ENCODE measurements at regions of chr11 and their contacts with region 1.

Region 1: DNA sequence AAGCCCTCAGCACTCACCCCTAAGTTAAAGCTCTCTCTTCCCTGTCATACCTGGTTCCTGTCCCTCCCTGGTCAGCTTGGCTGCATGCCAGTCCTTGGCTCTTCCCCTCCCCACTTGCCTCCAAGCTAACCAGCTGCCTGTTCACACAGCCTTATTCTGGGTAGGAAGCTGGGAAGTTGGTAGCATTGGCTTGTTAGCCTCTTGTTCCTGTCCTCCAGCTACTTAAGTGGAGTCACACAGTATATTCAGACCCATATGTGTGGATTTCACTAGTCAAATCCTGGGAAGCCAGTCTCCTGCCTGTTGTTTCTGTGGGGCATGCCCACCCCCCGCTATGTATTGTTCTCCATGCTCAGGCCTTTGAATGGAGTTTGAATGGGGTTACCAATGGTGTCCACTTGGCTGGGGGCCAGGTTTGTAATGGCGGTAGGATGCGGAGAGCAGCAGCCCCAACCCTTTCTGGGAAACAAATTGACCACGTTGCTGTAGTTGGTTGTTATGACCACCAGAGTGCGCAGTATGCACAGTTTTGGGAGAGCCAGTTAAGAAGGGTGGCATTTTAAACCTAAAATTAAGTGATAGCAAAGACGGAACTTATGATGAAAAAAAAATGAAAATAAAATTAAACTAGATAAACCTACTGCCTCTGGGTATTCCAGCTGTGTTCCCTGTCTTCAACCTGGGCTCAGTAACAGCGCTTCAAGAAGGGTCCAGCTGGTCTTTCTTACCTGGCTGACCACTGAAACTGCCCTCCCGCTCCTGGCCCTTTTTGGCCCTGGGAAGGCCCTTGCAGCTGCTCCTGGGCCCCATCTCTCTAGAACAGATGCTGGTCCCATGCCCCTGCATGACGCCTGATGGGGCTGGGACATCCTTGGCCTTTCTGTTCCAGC is 10.7 kb upstream of the RPS3 start:
- DNase-seq: peak; percentile 86 to 87
- ATAC-seq: peak; percentile 57 to 73
- H3K4me3 ChIP-seq: no peak overlapping the region
- H3K27ac ChIP-seq: peak overlapping the region; percentile 36 to 75; a peak in 5 of 6 replicates
- H3K4me1 ChIP-seq: peaks cover 39% of the 10 kb centered on the region
- CTCF ChIP-seq: peak; percentile 95
- EP300 ChIP-seq: no peak
- POLR2A ChIP-seq: no peak
- RAD21 ChIP-seq: peak; percentile 92 to 94

Region 2: GRCh38 chr11:75328426-75329277 is 60.0 kb before region 1 on chr11:
- CTCF ChIA-PET with region 1: interaction called, 147 read pairs
- POLR2A ChIA-PET with region 1: interaction called, 3 read pairs
- DNase-seq: peak; percentile 85 to 86
- ATAC-seq: peak; percentile 94 to 95
- H3K4me3 ChIP-seq: no peak overlapping the region
- H3K27ac ChIP-seq: peak overlapping the region; percentile 17 to 57; a peak in 5 of 6 replicates
- H3K4me1 ChIP-seq: peaks cover 62% of the 10 kb centered on the region
- CTCF ChIP-seq: peak; percentile 85
- EP300 ChIP-seq: no peak
- POLR2A ChIP-seq: no peak
- RAD21 ChIP-seq: peak; percentile 96 to 98

Region 3: GRCh38 chr11:75371941-75372789 is 16.5 kb before region 1 on chr11:
- CTCF ChIA-PET with region 1: interaction called, 83 read pairs
- POLR2A ChIA-PET with region 1: no interaction called
- DNase-seq: peak; percentile 73 to 96
- ATAC-seq: peak; percentile 95 to 97
- H3K4me3 ChIP-seq: peak overlapping the region; percentile 12; the same call in 1 of the 3 replicates
- H3K27ac ChIP-seq: peak overlapping the region; percentile 72 to 84
- H3K4me1 ChIP-seq: peaks cover 19% of the 10 kb centered on the region
- CTCF ChIP-seq: no peak
- EP300 ChIP-seq: peak; percentile 43 to 58; a peak in 2 of 5 replicates
- POLR2A ChIP-seq: no peak
- RAD21 ChIP-seq: peak in 1 of 2 experiments; percentile 21; a peak in 1 of 5 replicates

Region 4: GRCh38 chr11:75413864-75414263 is 25.2 kb after region 1 on chr11:
- CTCF ChIA-PET with region 1: interaction called, 33 read pairs
- POLR2A ChIA-PET with region 1: no interaction called
- DNase-seq: no peak
- ATAC-seq: no peak
- H3K4me3 ChIP-seq: no peak overlapping the region
- H3K27ac ChIP-seq: peak overlapping the region; percentile 2 to 40; a peak in 3 of 6 replicates
- H3K4me1 ChIP-seq: peaks cover 36% of the 10 kb centered on the region
- CTCF ChIP-seq: no peak
- EP300 ChIP-seq: no peak
- POLR2A ChIP-seq: no peak
- RAD21 ChIP-seq: no peak

Region 5: DNA sequence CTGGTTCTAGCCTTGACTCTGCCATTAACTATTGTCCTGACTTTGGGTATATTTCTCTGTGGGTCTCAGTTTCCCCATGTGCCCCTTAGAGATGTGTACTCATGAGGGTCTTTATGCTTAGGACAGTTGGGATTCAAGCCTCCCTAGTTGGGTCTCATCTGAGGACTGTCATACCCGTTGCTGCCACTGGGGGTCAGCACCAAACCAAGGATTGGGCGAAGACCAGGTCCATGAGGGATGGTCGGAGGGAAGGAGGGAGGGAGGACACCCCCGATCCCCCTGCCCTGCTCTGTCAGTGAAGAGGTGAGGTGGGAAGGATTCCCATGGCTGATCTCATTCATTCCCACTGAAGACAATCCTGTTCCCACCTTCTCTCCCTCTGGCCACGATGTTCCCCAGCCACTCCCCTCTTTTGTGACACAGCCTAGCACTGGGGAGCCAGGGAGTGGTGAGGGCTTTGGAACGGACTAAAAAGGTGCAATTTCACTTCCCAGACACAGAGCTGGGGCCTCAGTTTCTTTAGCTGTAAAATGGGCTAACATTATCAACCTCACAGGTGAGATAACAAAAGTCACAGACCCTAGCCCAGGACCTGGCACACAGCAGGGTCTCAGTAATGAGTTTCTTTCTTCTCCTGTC is 56.8 kb after region 1 on chr11:
- CTCF ChIA-PET with region 1: interaction called, 39 read pairs
- POLR2A ChIA-PET with region 1: no interaction called
- DNase-seq: peak; percentile 52 to 83
- ATAC-seq: peak; percentile 68 to 89
- H3K4me3 ChIP-seq: no peak overlapping the region
- H3K27ac ChIP-seq: no peak overlapping the region
- H3K4me1 ChIP-seq: no peaks in the 10 kb centered on the region
- CTCF ChIP-seq: peak; percentile 94
- EP300 ChIP-seq: no peak
- POLR2A ChIP-seq: no peak
- RAD21 ChIP-seq: peak; percentile 99

Region 6: DNA sequence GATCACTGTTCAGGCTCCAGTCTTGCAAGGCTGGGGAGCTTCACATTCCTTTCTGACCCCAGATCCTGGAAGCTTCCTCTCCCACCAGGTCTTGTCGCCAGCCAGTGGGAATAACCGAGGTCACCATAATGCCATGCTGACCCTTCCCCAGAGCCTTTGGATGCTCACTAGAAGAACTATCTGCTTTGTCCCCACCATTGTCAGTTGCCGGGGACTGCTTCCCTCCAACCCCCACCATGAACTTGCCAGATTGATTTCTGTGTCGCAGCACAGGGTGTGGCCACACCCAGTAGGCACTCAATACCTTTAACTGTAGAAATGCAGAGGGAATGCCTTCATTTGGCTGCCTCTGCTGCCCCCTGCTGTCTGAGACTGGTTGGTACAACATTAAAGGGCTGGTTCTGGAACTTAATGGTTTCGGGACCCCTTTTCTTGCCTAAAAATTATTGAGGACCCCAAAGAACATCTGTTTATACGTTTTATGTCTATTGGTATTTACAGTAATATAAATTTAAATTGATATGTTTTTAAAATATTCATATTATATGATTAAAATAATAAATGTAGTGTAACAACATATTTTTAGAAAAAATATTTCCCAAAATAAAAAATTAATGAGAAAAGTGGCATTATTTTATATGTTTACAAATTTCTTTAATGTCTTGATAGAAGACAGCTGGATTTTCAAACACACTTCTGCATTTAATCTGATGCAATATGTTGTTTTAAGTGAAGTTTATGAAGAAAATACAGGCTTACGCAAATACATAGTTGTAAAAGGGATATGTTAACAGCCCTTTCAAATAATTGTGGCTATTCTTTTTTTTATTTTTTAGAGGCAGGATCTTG is 143.8 kb after region 1 on chr11:
- CTCF ChIA-PET with region 1: interaction called, 172 read pairs
- POLR2A ChIA-PET with region 1: no interaction called
- DNase-seq: peak; percentile 71 to 82
- ATAC-seq: peak; percentile 58 to 74; a peak in 4 of 6 replicates
- H3K4me3 ChIP-seq: no peak overlapping the region
- H3K27ac ChIP-seq: peak overlapping the region; percentile 17 to 18; a peak in 2 of 6 replicates
- H3K4me1 ChIP-seq: peaks cover 30% of the 10 kb centered on the region
- CTCF ChIP-seq: peak; percentile 96
- EP300 ChIP-seq: no peak
- POLR2A ChIP-seq: no peak
- RAD21 ChIP-seq: peak; percentile 98 to 99